ENCODE measurements at regions of chr1 and their contacts with region 1.

Region 1: DNA sequence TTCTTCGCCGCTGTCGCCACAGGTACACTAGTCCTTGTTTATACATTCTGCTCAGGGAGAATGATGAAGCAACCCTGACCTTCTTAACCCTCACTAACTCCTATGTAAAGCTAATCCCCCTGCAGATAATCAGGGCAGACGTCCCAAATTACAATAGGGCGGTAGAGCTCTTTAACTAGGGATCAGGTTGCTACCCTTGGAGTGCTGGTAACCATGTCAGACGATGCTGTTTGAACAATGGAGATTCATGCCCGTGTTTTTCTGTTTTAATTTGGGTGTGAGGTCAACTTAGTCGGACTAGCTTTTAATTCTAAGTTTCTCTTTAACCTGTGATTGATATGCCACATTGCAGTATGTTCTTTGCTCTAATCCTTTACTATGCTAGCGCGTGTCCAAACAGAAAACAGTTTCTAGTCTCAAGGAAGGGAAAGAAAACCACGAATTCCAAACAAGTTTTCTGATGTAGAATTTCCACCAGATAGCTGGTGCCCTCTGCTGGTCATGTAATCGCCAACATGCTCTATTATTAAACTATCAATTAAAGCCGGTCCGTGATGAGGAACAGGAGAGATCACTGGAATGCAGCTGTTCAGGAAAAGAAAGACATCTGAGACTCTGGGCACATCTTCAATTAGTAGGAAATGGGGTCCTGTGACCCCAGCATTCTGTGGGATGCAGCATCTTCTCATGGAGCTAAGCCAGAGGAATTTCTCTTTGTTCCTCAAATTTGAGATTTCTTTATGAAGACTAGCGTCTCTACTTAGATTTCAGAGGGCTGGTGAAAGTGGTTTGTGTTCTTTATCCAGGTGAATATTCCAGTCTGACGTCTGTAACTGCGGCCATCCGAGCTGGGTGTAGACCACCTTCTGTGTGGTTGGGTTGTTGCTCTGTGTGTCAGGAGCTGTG is 18.3 kb upstream of the VAMP3 start:
- DNase-seq: peak; percentile 41
- H3K4me3 ChIP-seq: peak overlapping the region; percentile 55
- H3K27ac ChIP-seq: no peak overlapping the region
- H3K27me3 ChIP-seq: peaks cover 6% of the 10 kb centered on the region
- CTCF ChIP-seq: peak; percentile 87

Region 2: DNA sequence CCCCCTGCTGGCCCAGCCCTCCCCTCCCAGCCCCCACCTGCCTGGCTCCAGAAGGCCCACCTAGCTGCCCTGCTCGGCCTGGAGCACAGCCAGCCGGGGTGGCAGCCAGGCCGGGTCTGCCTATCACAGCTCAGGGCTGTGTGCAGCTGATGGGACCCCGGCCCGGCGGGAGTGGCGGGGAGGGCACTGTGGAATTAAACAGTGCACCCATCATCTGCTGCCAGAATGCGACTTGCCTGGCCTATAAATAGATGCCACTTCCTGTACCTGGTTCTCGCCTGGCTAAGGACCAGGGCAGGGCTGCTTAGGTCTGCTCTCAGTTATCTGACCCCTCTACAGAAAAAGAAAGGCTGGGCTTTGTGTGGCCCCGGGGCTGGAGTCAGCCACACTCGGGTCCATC is 79.9 kb before region 1 on chr1:
- CTCF ChIA-PET with region 1: interaction called, 677 read pairs
- POLR2A ChIA-PET with region 1: interaction called, 10 read pairs
- DNase-seq: no peak
- H3K4me3 ChIP-seq: no peak overlapping the region
- H3K27ac ChIP-seq: no peak overlapping the region
- H3K27me3 ChIP-seq: peaks cover 23% of the 10 kb centered on the region
- CTCF ChIP-seq: no peak

Region 3: DNA sequence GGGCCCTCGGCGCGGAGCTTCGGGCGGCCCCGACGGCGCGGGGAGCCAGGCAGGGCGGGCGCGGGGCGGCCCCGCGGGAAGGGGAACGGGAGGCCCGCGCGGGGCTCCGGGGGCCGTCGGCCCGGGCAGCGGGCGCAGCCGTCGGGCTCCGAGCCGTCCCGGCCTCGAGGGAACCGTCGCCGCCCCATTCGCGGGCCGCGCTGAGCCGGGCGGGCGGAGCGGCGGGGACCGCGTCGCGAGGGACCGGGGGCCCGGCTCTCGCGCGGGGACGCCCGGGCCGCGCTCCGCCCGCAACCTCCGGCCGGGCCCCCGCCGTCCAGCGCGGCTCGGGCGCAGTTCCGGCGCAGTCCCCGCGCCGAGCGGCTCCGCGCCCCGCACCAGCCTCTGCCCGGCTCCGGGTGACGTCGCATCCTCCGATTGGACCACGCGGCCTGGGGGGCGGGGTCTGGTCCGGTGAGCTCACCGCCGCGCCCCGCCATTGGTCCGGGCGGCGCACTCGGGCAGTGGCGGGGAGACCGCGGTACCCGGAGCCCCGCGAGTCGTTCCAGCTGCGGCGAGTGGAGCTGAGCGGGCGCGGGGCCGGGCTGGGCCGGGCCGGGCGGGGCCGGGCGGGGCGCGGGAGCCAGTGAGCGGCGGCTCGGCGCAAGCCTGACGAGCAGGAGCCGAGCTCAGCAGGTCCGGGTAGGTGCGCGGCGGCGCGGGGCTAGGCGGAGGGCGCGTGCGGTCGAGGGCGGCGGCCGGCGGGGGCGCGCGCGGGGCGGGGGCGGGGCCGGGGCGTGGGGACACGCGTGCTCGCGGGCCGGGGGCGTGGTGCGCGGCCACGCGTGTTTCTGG is 48.3 kb before region 1 on chr1:
- CTCF ChIA-PET with region 1: interaction called, 11 read pairs
- POLR2A ChIA-PET with region 1: no interaction called
- DNase-seq: peak; percentile 45
- H3K4me3 ChIP-seq: peak overlapping the region; percentile 17; the same call in 1 of the 2 replicates
- H3K27ac ChIP-seq: no peak overlapping the region
- H3K27me3 ChIP-seq: peaks cover 52% of the 10 kb centered on the region
- CTCF ChIP-seq: no peak

Region 4: DNA sequence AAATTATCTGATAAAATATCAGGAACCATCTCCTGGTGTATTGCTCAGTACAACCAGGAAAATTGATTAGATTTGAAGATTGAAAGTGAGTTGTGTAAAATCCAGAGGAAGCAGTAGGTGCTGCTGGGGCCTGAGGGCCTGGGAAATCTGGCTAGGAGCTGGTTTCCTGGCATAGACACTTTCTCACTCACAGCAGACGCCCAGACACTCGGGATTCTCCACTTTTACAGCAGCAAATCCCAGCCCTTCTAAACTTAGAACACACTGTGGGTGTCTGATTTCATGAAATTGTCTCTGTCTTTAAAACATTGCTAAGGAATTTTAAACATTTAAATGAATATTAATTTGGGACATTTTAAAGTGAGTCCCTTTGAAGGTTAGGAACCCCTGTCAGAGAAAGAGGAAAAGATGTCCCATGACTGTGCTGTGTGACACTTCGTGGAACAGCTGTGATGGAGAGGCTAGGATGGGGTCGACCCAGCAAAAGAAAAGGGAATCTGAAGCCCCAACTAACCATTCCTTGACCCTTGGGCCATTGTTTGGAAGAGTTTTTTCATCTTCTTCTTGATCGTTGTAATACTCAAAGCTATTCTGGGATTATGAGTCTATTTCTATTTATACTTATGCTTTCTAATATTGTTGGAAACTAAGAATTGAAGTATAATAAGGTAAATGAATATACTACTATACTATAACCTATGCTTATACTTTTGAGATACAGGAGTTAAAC is 30.7 kb before region 1 on chr1:
- CTCF ChIA-PET with region 1: interaction called, 18 read pairs
- POLR2A ChIA-PET with region 1: no interaction called
- DNase-seq: no peak
- H3K4me3 ChIP-seq: no peak overlapping the region
- H3K27ac ChIP-seq: no peak overlapping the region
- H3K27me3 ChIP-seq: peaks cover 22% of the 10 kb centered on the region
- CTCF ChIP-seq: no peak

Region 5: DNA sequence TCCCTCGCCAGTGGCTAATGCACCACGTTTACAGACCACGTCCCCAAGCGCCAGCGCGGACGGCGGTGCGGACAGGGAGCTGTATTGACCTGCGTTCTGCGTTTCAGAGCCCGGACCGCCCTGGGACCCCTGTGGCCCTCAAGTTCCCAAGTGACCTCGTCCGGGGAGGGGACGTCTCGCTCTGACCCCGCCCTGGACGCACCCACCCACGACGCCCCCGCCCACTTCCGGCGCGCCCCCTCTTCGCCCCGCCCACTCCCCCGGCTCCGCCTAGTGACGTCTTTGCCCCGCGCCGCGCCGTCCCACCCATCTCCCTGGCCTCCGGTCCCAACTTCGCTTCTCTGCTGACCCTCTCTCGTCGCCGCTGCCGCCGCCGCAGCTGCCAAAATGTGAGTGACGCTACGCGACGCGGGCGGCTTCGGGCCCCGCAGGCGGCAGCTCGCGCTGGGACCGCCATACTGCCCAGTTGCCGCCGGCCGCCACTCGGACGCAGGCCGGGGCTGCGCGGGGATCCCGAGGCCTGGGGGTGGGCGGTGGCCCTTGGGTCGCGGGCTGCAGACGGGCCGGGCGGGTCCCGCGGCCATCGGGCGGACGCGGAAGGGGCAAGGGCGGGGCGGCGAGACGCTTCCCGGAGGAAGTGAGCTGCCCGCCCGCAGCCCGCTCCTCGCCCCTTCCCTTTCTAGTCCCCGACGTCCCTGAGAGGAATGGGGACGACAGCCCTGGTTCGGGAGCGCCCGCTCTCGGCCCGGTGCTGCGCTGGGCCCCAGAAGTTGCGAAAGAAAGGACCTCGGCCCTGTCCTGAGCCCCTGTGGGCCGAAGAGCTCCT is 18.4 kb after region 1 on chr1 and contains the start of gene VAMP3:
- CTCF ChIA-PET with region 1: interaction called, 39 read pairs
- POLR2A ChIA-PET with region 1: interaction called, 3 read pairs
- DNase-seq: no peak
- H3K4me3 ChIP-seq: peak within 1 kb of the TSS; percentile 85
- H3K27ac ChIP-seq: peak within 1 kb of the TSS; percentile 40
- H3K27me3 ChIP-seq: peaks cover 5% of the 10 kb centered on the region
- CTCF ChIP-seq: no peak
- polyA plus RNA-seq, gene VAMP3: 154 and 177 TPM in 2 replicates

Region 6: GRCh38 chr1:8211589-8212442 is 459.1 kb after region 1 on chr1:
- CTCF ChIA-PET with region 1: no interaction called
- POLR2A ChIA-PET with region 1: no interaction called
- DNase-seq: peak; percentile 95
- H3K4me3 ChIP-seq: no peak overlapping the region
- H3K27ac ChIP-seq: peak overlapping the region; percentile 95
- H3K27me3 ChIP-seq: no peaks in the 10 kb centered on the region
- CTCF ChIP-seq: no peak